ENCODE measurements at regions of chr3 and their contacts with region 1.

Region 1: DNA sequence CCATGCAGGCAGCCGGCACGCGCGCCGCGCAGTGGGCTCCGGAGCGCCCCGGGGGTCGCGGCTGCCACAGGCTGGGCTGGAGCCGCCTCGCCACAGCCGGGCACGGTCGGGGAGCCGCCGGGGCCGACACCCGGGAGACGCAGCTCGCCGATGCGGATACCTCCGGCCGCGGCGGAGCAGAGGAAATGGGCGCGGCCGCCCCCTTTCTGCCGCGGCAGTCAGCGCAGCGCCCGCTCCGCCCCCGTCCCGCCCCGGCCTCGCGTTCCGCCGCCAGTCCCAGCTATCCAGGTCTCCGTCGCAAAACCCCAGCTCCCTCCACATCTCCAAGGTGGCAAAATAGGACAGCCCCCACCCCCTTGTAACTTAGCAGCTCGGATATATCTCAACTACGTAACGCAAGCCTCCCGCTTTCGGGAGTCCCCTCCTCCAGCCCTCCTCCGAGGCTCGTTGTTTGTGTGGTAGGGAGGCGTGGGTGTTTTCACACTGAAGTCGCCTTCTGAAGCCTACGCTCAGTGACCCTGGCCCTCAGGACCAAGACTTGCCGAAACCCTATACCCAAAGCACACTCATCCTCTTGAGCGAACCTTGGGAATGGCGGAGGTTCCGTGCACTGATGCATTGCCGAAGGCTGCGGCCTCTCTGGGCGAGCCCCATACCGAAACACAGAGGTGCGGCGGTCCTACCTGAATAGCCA is at the start of gene SH3BP5:
- DNase-seq: peak; percentile 86
- ATAC-seq: peak; percentile 85
- H3K4me3 ChIP-seq: peak within 1 kb of the TSS; percentile 75 to 98 (median 92)
- H3K4me3 Mint-ChIP-seq: peak within 1 kb of the TSS; percentile 93
- H3K27ac ChIP-seq: peak within 1 kb of the TSS; percentile 76 to 84
- H3K27ac Mint-ChIP-seq: peak within 1 kb of the TSS; percentile 94
- H3K4me1 ChIP-seq: peaks cover 49% of the 10 kb centered on the region in 2 donors
- H3K4me1 Mint-ChIP-seq: peaks cover 58% of the 10 kb centered on the region
- H3K27me3 ChIP-seq: no peaks in the 10 kb centered on the region
- H3K27me3 Mint-ChIP-seq: no peaks in the 10 kb centered on the region
- CTCF ChIP-seq: peak; percentile 75
- total RNA-seq, gene SH3BP5: 73.6 and 76.6 TPM in 2 replicates

Region 2: DNA sequence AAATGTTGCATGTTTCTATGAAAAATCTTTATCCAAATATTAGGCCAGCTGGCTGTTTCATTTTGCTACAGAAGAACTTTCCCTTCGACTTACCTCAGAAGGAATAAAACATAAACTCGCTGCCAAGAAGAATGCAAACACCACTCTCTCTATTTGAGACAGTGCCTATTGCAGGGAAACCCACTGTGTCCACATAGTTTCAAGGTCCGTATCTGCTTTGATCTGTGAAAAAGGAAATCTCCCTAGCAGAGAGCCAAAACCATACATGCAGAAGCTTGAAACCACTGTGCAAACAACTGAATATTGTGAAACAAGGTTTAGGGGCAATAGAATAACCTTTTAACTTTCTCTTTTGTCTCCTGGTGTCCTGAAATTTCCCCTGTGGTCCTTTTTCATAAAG is 161.5 kb before region 1 on chr3:
- CTCF ChIA-PET with region 1: no interaction called
- POLR2A ChIA-PET with region 1: no interaction called
- intact Hi-C with region 1: no loop called
- DNase-seq: no peak
- ATAC-seq: no peak
- H3K4me3 ChIP-seq: no peak overlapping the region
- H3K4me3 Mint-ChIP-seq: no peak overlapping the region
- H3K27ac ChIP-seq: no peak overlapping the region
- H3K27ac Mint-ChIP-seq: no peak overlapping the region
- H3K4me1 ChIP-seq: no peaks in the 10 kb centered on the region
- H3K4me1 Mint-ChIP-seq: peaks cover 3% of the 10 kb centered on the region
- H3K27me3 ChIP-seq: peaks cover 0 to 9% (median 2%) of the 10 kb centered on the region in 4 experiments
- H3K27me3 Mint-ChIP-seq: peaks cover 27% of the 10 kb centered on the region
- CTCF ChIP-seq: no peak

Region 3: DNA sequence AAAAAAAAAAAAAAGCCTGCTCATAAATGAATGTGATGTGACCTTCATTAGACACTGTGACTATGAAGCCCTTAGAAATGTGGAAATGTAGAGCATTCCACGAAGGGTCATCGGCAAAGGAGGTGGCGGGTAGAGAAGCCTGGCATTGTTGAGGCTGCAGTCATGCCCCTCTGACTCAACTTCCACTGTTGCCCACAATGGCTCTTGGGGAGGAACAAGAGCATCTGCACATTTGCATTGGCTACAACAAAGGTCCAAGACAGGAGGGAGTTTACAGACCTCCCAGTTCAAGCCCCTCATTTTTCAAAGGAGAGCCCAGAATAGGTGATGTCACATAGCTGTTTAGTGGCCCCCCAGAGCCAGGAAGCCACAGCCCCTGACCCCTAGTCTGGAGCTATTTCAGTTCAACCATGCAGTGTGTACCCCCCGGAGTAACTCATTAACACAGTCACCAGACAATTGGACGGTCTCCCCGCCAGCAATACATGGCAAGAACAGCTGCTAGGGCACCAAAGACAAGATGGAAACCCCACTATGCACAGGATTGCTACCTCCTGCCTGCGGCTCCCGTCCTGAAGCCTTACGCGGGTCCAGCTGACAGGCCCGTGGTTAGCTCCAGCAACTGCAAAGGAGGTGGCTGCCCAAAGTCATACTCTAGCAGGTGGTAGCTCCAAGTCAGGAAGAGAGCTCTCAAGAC is 56.4 kb before region 1 on chr3:
- CTCF ChIA-PET with region 1: interaction called, 221 read pairs
- POLR2A ChIA-PET with region 1: interaction called, 5 read pairs
- intact Hi-C with region 1: loop called (anchors 1 kb)
- DNase-seq: no peak
- ATAC-seq: no peak
- H3K4me3 ChIP-seq: no peak overlapping the region
- H3K4me3 Mint-ChIP-seq: peak overlapping the region; percentile 28
- H3K27ac ChIP-seq: no peak overlapping the region
- H3K27ac Mint-ChIP-seq: peak overlapping the region; percentile 56
- H3K4me1 ChIP-seq: peaks cover 86 to 93% of the 10 kb centered on the region in 2 donors
- H3K4me1 Mint-ChIP-seq: peaks cover 89% of the 10 kb centered on the region
- H3K27me3 ChIP-seq: no peaks in the 10 kb centered on the region
- H3K27me3 Mint-ChIP-seq: no peaks in the 10 kb centered on the region
- CTCF ChIP-seq: no peak

Region 4: DNA sequence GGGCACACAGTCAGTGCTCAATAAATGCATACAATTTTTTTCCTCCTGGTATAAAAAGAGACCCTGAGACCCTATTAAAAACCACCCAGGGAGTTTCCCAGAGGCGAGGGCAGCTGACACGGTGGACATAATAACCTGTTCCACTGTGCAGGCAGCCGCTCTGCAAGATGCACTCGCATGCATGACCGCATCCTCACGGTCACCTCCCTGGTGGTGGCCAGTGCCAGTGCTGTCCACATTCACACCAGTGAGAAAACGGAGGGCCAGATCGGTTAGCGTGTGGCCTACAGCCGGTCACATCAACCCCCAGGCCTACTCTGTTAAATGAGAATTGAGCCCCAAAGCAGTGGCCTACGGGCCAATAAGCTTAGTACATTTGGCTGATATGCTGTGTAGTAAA is 25.0 kb before region 1 on chr3:
- CTCF ChIA-PET with region 1: interaction called, 10 read pairs
- POLR2A ChIA-PET with region 1: interaction called, 3 read pairs
- intact Hi-C with region 1: no loop called
- DNase-seq: no peak
- ATAC-seq: no peak
- H3K4me3 ChIP-seq: no peak overlapping the region
- H3K4me3 Mint-ChIP-seq: no peak overlapping the region
- H3K27ac ChIP-seq: peak overlapping the region in 1 of 2 donors; percentile 59
- H3K27ac Mint-ChIP-seq: peak overlapping the region; percentile 50
- H3K4me1 ChIP-seq: peaks cover 68 to 82% of the 10 kb centered on the region in 2 donors
- H3K4me1 Mint-ChIP-seq: peaks cover 84% of the 10 kb centered on the region
- H3K27me3 ChIP-seq: no peaks in the 10 kb centered on the region
- H3K27me3 Mint-ChIP-seq: no peaks in the 10 kb centered on the region
- CTCF ChIP-seq: no peak

Region 5: DNA sequence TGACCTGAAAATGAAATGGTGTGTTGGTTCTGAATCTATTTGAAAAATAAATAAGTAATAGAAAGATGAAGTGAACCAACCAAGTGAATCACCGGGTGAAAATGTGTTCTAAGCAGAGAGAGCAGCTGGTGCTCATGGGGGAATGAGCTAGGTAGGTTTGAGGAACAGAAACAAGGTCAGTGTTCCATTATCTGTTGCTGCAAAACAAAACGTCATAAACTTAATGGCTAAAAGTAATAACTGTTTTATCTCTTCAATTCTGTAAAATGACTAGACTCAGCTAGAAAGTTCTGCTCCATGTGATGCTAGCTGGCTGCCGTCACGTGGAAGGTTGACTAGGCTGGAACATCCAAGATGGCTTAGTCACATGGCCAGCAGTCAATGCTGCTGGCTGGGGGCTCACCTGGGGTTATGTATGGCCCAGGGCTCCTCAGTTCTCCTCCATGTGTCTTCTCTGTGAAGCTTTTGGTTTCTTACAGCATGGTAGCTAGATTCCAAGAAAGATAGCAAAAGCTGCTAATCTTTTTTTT is 13.1 kb after region 1 on chr3:
- CTCF ChIA-PET with region 1: interaction called, 60 read pairs
- POLR2A ChIA-PET with region 1: interaction called, 24 read pairs
- intact Hi-C with region 1: loop called (anchors 1 kb)
- DNase-seq: peak; percentile 87
- ATAC-seq: peak; percentile 89
- H3K4me3 ChIP-seq: peak overlapping the region in 1 of 5 experiments; percentile 7
- H3K4me3 Mint-ChIP-seq: peak overlapping the region; percentile 76
- H3K27ac ChIP-seq: peak overlapping the region; percentile 92 to 94
- H3K27ac Mint-ChIP-seq: peak overlapping the region; percentile 99
- H3K4me1 ChIP-seq: peaks cover 73 to 80% of the 10 kb centered on the region in 2 donors
- H3K4me1 Mint-ChIP-seq: peaks cover 71% of the 10 kb centered on the region
- H3K27me3 ChIP-seq: no peaks in the 10 kb centered on the region
- H3K27me3 Mint-ChIP-seq: no peaks in the 10 kb centered on the region
- CTCF ChIP-seq: no peak

Region 6: DNA sequence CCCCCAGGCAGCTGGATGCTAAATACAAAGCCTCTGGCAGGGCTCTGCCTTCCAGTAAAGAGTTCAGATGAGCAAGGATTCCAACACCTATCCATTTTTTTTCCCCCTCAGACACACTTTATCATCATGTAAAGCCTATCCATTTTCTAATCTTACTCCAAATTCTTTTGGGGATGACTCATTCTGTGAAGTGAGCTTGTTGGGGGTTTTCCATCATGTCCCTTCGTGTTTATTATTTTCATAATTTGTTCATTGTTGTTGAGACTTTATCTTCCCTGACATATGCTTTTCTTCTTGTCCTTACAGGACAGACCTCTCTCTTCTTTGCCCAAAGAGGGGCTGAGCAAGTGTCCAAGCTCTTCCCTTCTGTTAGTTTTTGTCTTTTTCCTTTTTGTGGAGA is 34.5 kb after region 1 on chr3:
- CTCF ChIA-PET with region 1: interaction called, 41 read pairs
- POLR2A ChIA-PET with region 1: interaction called, 9 read pairs
- intact Hi-C with region 1: loop called (anchors 1 kb)
- DNase-seq: no peak
- ATAC-seq: no peak
- H3K4me3 ChIP-seq: no peak overlapping the region
- H3K4me3 Mint-ChIP-seq: peak overlapping the region; percentile 52
- H3K27ac ChIP-seq: no peak overlapping the region
- H3K27ac Mint-ChIP-seq: peak overlapping the region; percentile 53
- H3K4me1 ChIP-seq: peaks cover 38 to 42% of the 10 kb centered on the region in 2 donors
- H3K4me1 Mint-ChIP-seq: peaks cover 52% of the 10 kb centered on the region
- H3K27me3 ChIP-seq: no peaks in the 10 kb centered on the region
- H3K27me3 Mint-ChIP-seq: no peaks in the 10 kb centered on the region
- CTCF ChIP-seq: no peak

Region 7: DNA sequence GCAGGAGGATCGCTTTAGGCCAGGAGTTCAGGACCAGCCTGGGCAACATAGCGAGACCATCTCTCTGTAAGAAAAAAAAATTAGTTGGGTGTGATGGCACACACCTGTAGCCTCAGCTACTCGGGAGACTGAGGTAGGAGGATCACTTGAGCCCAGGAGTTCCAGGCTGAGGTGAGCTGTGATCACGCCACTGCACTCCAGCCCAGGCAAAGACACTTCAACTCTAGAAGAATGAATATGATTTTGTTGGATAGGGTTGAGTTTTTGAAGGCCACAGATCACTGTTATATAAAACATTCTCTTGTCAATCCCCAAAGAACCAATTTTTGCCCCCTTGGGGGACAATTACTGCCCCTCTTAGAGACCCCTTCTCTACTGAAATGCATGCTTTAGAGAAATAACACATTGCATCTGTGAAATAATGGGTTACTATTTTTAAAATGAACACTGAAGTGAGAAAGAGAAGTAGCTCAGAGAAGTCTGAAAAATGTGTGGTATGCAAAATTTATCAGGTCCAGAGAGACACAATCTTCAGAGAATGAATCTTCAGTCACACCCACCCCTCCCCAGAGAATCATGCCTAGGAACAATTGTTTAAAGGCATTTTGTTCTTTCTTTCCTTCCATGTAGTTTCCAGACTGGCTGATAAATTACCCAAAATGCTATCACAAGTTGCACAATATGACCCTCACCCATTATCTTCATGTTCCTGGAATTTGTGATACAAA is 52.1 kb after region 1 on chr3:
- CTCF ChIA-PET with region 1: interaction called, 26 read pairs
- POLR2A ChIA-PET with region 1: interaction called, 3 read pairs
- intact Hi-C with region 1: no loop called
- DNase-seq: peak; percentile 70
- ATAC-seq: peak; percentile 89
- H3K4me3 ChIP-seq: peak overlapping the region in 3 of 5 experiments; percentile 18 to 32 (median 27)
- H3K4me3 Mint-ChIP-seq: peak overlapping the region; percentile 57
- H3K27ac ChIP-seq: peak overlapping the region; percentile 83 to 85
- H3K27ac Mint-ChIP-seq: peak overlapping the region; percentile 77
- H3K4me1 ChIP-seq: peaks cover 73 to 88% of the 10 kb centered on the region in 2 donors
- H3K4me1 Mint-ChIP-seq: peaks cover 75% of the 10 kb centered on the region
- H3K27me3 ChIP-seq: no peaks in the 10 kb centered on the region
- H3K27me3 Mint-ChIP-seq: no peaks in the 10 kb centered on the region
- CTCF ChIP-seq: no peak

Region 8: DNA sequence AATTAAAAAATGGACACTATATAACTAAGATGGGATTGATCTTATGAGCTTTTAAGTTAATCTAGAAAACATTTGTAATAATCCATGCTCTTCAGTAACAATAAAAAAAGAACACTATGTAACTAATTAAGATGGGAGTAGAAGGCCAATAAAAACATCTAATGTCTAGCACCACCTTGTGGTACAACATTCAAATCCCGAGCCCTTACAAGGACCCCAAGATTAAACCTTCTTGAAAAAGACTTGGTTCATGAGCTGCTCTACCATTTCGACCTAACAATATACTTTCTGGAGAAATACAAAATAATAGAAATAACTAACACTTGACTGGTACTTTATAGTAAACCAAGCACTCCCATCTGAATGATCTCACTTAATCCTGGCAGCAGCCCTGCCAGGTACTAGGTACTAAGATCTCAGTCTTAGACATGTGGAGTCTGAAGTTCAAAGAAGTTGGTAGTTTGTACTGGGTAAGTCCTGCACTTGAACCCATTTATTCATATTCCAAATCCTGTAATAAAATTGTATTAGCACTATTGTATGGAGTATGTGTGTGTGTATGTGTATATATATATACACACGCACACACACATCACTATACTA is 73.0 kb after region 1 on chr3:
- CTCF ChIA-PET with region 1: interaction called, 13 read pairs
- POLR2A ChIA-PET with region 1: no interaction called
- intact Hi-C with region 1: no loop called
- DNase-seq: peak; percentile 80
- ATAC-seq: peak; percentile 73
- H3K4me3 ChIP-seq: no peak overlapping the region
- H3K4me3 Mint-ChIP-seq: no peak overlapping the region
- H3K27ac ChIP-seq: no peak overlapping the region
- H3K27ac Mint-ChIP-seq: no peak overlapping the region
- H3K4me1 ChIP-seq: peaks cover 25 to 30% of the 10 kb centered on the region in 2 donors
- H3K4me1 Mint-ChIP-seq: peaks cover 19% of the 10 kb centered on the region
- H3K27me3 ChIP-seq: no peaks in the 10 kb centered on the region
- H3K27me3 Mint-ChIP-seq: no peaks in the 10 kb centered on the region
- CTCF ChIP-seq: peak; percentile 84